ENCODE measurements at regions of chr6 and their contacts with region 1.

Region 1: DNA sequence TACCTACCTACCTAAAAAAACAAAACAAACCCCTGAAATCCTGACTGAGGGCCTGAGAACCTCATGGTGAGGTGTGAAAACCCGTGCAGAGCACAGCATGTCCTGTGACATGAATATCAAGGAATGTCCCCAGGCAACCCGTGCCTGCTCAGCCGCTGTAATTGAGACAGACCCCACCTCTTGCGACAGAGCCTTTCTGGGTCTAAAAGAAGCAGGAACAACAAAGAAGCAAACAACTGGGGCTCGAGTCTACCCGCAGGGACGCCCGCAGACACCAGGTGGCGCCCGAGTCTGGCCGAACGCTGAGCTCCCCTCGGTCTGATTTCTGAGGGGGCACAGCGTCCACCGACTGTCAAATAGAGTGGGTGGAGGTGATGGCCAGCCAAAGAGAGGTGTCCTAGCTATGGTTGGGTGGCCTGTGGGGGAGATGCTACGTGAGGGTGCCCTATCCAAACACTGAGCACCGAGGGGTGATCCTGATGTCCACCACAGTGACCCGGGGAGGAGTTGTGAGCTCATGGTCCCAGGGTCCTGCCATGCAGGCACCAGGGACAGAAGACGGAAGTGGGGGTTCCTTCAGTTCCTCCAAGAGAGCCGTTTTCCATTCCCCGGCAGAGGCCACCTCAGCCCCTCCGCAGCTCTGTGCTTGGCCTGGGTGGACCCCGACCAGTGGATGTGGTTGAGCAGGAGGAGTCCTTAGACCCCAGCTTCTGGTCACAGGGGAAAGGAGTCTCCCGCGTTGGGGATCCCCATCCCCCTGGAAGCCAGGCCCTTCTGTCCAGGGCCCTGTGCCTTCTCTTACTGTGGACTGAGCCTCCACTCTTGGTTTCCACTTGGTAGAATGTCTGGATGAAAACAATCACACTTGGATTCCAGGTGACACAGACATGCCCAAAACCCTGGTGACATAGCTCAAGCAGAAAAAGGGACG is 268.2 kb downstream of the CDC5L start:
- DNase-seq: no peak
- H3K4me3 ChIP-seq: no peak overlapping the region
- CTCF ChIP-seq: peak; percentile 94

Region 2: DNA sequence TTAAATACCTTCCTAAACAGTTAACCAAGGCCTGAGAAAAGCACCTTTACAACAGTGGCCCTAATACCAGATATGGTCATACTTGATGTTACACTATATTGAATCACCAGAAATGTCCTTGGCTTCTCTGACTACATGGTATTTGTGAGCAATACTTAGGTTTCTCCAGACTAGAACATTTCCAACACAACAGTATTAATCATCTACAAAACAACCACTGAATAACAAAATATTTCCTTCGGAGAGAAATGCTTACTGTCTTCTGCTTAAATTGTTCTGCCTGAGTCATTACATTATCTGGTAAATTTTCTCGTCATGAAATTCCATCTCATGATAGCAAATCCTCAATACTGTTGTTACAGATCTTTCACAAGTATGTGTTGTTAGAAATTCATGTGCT is 419.6 kb after region 1 on chr6:
- in situ Hi-C with region 1: loop called (anchors 25 kb)
- DNase-seq: peak; percentile 86
- H3K4me3 ChIP-seq: no peak overlapping the region
- CTCF ChIP-seq: no peak

Region 3: DNA sequence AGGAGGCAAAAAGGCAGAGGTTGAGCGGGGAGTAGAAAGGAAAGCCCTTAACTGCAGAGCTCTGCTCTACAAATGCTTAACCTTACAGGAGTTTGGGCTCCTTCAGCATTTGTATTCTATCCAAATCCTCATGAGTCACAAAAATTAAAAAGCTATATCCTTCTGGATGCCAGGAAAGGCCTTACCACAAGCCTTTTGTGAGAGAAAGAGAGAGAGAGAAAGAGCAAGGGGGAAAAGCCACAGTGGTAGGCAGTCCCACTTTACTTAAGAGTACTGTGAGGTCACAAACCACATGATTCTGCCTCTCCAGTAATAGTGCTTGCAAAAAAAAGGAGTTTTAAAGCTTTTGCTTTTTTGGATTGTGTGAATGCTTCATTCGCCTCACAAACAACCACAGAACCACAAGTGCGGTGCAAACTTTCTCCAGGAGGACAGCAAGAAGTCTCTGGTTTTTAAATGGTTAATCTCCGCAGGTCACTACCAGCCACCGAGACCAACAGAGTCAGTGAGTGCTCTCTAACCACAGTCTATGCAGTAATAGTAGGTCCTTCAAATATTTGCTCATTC is 672.4 kb after region 1 on chr6 and contains the start of gene RUNX2:
- in situ Hi-C with region 1: loop called (anchors 5 kb)
- DNase-seq: peak; percentile 97
- H3K4me3 ChIP-seq: peak within 1 kb of the TSS; percentile 68
- CTCF ChIP-seq: no peak

Region 4: DNA sequence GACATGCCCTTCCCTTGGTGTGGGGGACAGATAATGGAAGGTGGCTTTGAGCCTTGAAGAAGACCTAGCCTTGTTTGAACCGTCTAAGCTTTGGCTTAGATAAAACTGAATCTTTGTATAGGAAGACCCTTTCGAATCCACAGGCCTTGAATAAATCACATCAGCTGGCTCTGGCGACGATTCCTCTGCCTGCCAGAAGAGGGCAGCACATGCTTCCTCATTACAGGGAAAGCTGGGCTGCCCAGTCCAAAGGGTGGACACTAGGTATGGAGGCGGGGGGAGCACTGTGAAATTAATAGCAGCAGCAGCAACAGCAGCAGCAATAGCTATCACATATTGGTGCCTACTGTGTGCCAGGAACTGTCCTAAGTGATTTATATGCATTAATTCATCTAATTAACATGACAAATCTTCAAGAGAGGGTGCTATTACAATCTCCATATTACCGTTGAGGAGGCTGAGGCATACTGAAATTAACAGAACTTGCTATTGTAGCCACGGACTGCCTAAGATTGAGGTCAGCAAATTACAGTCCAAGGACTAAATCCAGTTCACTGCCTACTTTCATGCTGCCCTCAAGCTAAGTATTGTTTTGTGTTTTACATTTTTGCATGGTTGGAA is 1274.9 kb after region 1 on chr6:
- in situ Hi-C with region 1: loop called (anchors 25 kb)
- DNase-seq: peak; percentile 61
- H3K4me3 ChIP-seq: no peak overlapping the region
- CTCF ChIP-seq: peak; percentile 99